H1 (cell line): ENCODE measurements at regions of chr12 and their contacts with region 1.

Region 1: GRCh38 chr12:126069549-126070165 is 1004.4 kb downstream of the AACS start:
- DNase-seq: peak; percentile 39 to 90
- H3K4me3 ChIP-seq: no peak overlapping the region; a peak in 1 of 8 replicates
- H3K27ac ChIP-seq: no peak overlapping the region
- H3K4me1 ChIP-seq: no peaks in the 10 kb centered on the region
- H3K27me3 ChIP-seq: no peaks in the 10 kb centered on the region
- CTCF ChIP-seq: peak; percentile 32 to 82 (median 72)
- EP300 ChIP-seq: no peak
- POLR2A ChIP-seq: no peak
- RAD21 ChIP-seq: peak; percentile 97 to 99

Region 2: GRCh38 chr12:126084480-126084879 is 14.8 kb after region 1 on chr12:
- CTCF ChIA-PET with region 1: interaction called, 26 read pairs
- POLR2A ChIA-PET with region 1: no interaction called
- DNase-seq: no peak
- H3K4me3 ChIP-seq: no peak overlapping the region
- H3K27ac ChIP-seq: no peak overlapping the region
- H3K4me1 ChIP-seq: no peaks in the 10 kb centered on the region; a peak in 1 of 7 replicates
- H3K27me3 ChIP-seq: no peaks in the 10 kb centered on the region
- CTCF ChIP-seq: no peak
- EP300 ChIP-seq: no peak
- POLR2A ChIP-seq: no peak
- RAD21 ChIP-seq: no peak

Region 3: DNA sequence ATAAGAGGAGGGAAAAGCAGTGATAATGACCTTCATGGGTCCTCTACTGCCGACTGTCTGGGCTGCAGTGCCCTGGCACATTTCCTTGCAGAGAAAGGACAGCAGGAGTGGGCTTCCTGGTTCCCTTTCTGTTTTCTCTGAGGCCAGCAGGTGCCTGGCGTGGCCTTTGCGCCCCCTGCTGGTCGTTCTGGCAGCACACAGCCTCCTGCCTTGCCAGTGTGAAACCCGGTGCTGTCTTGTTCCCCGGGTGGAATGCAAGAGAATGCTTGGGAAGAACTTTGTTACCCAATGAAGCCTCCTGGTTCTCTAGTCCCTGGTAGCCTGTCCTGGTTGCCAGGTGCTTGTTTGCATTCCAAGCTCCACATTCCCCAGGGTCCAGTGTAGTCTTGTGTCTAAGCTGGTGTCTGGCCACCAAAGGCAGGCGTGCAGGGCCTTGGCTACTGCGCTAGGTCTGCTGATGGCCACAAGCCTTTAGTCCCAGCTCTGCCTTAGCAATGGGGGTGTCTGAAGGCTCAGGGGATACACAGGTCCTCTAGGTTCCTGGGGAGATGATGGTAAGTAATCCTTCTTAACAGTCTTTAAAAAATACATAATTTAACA is 804.9 kb after region 1 on chr12:
- CTCF ChIA-PET with region 1: interaction called, 14 read pairs
- POLR2A ChIA-PET with region 1: no interaction called
- DNase-seq: peak; percentile 74 to 89
- H3K4me3 ChIP-seq: no peak overlapping the region
- H3K27ac ChIP-seq: no peak overlapping the region
- H3K4me1 ChIP-seq: no peaks in the 10 kb centered on the region
- H3K27me3 ChIP-seq: no peaks in the 10 kb centered on the region
- CTCF ChIP-seq: peak; percentile 95 to 97 (median 97)
- EP300 ChIP-seq: no peak
- POLR2A ChIP-seq: no peak
- RAD21 ChIP-seq: peak; percentile 88 to 91